ENCODE measurements at regions of chr17 and their contacts with region 1.

Region 1: DNA sequence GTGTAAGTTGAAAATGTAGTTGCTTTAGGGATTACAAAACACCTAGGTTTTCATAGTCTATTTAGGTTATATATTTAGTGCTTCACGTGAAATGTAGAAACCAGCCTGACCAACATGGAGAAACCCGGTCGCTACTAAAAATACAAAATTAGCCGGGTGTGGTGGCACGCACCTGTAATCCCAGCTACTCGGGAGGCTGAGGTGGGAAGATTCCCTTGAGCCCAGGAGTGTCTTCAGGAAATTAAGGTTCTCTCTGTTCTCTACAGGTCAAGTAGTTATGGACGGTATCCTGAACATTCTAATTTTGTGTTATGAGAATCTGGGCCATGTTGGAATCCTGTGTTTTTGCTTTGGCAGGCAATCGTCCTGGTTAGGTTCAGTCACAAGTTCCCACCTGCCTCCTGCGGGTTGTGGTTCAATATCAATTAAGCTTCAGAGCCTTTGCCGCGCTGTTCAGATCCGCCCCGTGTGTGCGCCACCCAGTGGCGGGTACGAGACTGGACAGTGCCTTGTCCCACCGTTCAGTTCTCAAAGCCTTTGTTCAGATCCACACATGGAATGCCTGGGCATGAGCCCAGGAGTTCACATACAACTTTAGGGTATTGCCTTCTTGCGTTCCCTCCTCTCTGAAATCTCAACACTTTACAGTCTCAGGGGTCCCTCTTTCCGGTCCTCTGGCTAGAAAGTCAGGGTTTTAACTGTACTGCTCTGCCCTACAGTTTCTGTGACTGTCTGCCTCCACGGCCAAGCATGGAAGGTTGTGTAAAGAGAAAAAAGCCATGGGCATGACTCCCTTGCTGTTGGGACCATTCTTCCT is 41.7 kb downstream of the HEATR6 start:
- DNase-seq: peak; percentile 75
- H3K4me3 Mint-ChIP-seq: no peak overlapping the region
- H3K27ac Mint-ChIP-seq: no peak overlapping the region
- H3K4me1 Mint-ChIP-seq: peaks cover 4% of the 10 kb centered on the region
- H3K27me3 Mint-ChIP-seq: peaks cover 17% of the 10 kb centered on the region

Region 2: GRCh38 chr17:59914274-59914854 is 122.6 kb before region 1 on chr17:
- CTCF ChIA-PET with region 1: interaction called, 5 read pairs
- intact Hi-C with region 1: loop called (anchors 5 kb)
- DNase-seq: peak; percentile 32
- H3K4me3 Mint-ChIP-seq: no peak overlapping the region
- H3K27ac Mint-ChIP-seq: no peak overlapping the region
- H3K4me1 Mint-ChIP-seq: peaks cover 2% of the 10 kb centered on the region
- H3K27me3 Mint-ChIP-seq: no peaks in the 10 kb centered on the region

Region 3: GRCh38 chr17:59950049-59950448 is 87.0 kb before region 1 on chr17:
- CTCF ChIA-PET with region 1: no interaction called
- intact Hi-C with region 1: no loop called
- DNase-seq: no peak
- H3K4me3 Mint-ChIP-seq: no peak overlapping the region
- H3K27ac Mint-ChIP-seq: no peak overlapping the region
- H3K4me1 Mint-ChIP-seq: peaks cover 34% of the 10 kb centered on the region
- H3K27me3 Mint-ChIP-seq: no peaks in the 10 kb centered on the region

Region 4: DNA sequence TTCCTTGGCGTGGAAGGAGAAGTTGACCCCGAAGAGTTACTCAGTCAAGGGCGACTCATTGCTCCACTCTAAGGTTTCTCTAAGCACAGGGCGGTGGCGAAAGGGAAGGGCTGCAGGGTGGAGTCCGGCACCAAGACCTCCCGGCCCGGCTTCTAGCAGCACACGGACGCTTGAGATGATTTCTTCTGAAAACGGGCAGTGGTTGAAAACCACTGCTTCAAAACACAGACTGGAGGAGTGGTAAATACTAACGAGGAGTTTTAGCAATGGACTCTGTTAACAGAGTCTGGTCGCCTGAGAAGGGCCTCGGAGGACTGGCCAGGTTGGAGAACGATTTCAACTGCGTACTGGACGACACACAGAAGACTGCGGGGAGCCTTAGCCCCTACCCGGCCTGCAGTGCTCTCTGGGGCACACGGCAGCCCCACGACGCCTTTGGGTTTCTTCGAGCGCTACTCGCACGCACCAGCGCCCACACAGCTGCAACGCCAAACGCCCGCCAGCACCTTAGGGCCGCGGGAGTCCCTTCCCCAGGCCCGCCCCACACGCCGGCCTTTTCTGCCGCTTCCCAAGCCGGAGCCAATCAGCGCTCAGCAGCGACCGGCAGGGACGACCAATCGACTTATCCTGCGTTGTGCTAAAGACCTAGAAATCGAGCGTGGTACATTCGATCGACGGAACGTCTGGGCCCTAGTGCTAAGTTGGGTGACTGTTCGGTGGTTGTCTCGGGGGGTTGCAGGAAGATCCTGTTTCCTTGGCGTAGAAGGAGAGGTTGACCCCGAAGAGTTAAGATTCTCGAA is 98.3 kb after region 1 on chr17:
- CTCF ChIA-PET with region 1: no interaction called
- intact Hi-C with region 1: loop called (anchors 10 kb)
- DNase-seq: peak; percentile 90
- H3K4me3 Mint-ChIP-seq: peak overlapping the region; percentile 85
- H3K27ac Mint-ChIP-seq: no peak overlapping the region
- H3K4me1 Mint-ChIP-seq: peaks cover 23% of the 10 kb centered on the region
- H3K27me3 Mint-ChIP-seq: peaks cover 29% of the 10 kb centered on the region

Region 5: GRCh38 chr17:60169921-60170742 is 133.1 kb after region 1 on chr17:
- CTCF ChIA-PET with region 1: interaction called, 3 read pairs
- intact Hi-C with region 1: loop called (anchors 10 kb)
- DNase-seq: peak; percentile 63
- H3K4me3 Mint-ChIP-seq: peak overlapping the region; percentile 40
- H3K27ac Mint-ChIP-seq: peak overlapping the region; percentile 80
- H3K4me1 Mint-ChIP-seq: peaks cover 34% of the 10 kb centered on the region
- H3K27me3 Mint-ChIP-seq: peaks cover 3% of the 10 kb centered on the region

Measured in activated naive CD4-positive, alpha-beta T cell treated with anti-CD3 and anti-CD28 coated beads for 36 hours (primary cell).